ENCODE measurements at regions of chr1 and their contacts with region 1.

Region 1: GRCh38 chr1:233790662-233791375 is 113.7 kb upstream of the SLC35F3 start:
- DNase-seq: peak in 1 of 2 donors; percentile 28
- ATAC-seq: peak in 7 of 8 donors; percentile 67 to 88 (median 79)
- H3K4me3 ChIP-seq: no peak overlapping the region
- H3K27ac ChIP-seq: no peak overlapping the region
- H3K4me1 ChIP-seq: no peaks in the 10 kb centered on the region
- H3K27me3 ChIP-seq: peaks cover 0 to 12% (median 0%) of the 10 kb centered on the region in 7 donors
- CTCF ChIP-seq: peak; percentile 65 to 87 (median 84)

Region 2: GRCh38 chr1:233394860-233395717 is 395.7 kb before region 1 on chr1:
- intact Hi-C with region 1: loop called in 1 of 10 experiments (anchors 10 kb)
- DNase-seq: peak in 1 of 2 donors; percentile 16
- ATAC-seq: peak in 5 of 8 donors; percentile 60 to 88 (median 73)
- H3K4me3 ChIP-seq: no peak overlapping the region
- H3K27ac ChIP-seq: no peak overlapping the region
- H3K4me1 ChIP-seq: peaks cover 0 to 4% (median 0%) of the 10 kb centered on the region in 9 donors
- H3K27me3 ChIP-seq: peaks cover 0 to 38% (median 7%) of the 10 kb centered on the region in 7 donors
- CTCF ChIP-seq: peak; percentile 21 to 77 (median 67)

Region 3: GRCh38 chr1:233440951-233441401 is 349.8 kb before region 1 on chr1:
- intact Hi-C with region 1: loop called in 9 of 10 experiments (anchors 2 to 10 kb)
- DNase-seq: peak in 1 of 2 donors; percentile 7
- ATAC-seq: peak in 5 of 8 donors; percentile 38 to 51 (median 47)
- H3K4me3 ChIP-seq: no peak overlapping the region
- H3K27ac ChIP-seq: no peak overlapping the region
- H3K4me1 ChIP-seq: peaks cover 0 to 4% (median 0%) of the 10 kb centered on the region in 9 donors
- H3K27me3 ChIP-seq: peaks cover 0 to 30% (median 15%) of the 10 kb centered on the region in 7 donors
- CTCF ChIP-seq: peak; percentile 14 to 74 (median 60)

Region 4: DNA sequence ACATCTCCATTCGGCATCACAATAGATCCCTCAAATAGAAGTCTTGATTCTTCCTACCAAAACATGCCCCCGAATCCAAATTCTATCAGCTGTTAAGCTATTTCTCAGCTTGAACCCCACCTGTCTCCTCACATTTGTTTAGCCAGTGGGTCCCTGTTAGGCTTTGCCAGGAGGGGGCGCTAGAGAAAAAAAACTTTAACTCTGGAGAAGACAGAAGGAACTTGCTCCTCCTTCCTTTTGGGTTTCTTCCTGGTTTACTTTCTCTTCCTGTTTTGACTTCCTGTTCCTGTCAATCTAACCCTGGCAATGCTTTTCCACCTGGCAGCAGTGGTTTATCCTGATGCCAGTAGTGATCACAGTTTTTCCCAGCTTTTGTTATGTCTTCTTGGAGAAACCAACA is 272.5 kb before region 1 on chr1:
- intact Hi-C with region 1: loop called in 8 of 10 experiments (anchors 1 to 10 kb)
- DNase-seq: no peak
- ATAC-seq: no peak
- H3K4me3 ChIP-seq: no peak overlapping the region
- H3K27ac ChIP-seq: no peak overlapping the region
- H3K4me1 ChIP-seq: no peaks in the 10 kb centered on the region
- H3K27me3 ChIP-seq: peaks cover 0 to 3% (median 0%) of the 10 kb centered on the region in 7 donors
- CTCF ChIP-seq: peak; percentile 12 to 59 (median 50)

Region 5: DNA sequence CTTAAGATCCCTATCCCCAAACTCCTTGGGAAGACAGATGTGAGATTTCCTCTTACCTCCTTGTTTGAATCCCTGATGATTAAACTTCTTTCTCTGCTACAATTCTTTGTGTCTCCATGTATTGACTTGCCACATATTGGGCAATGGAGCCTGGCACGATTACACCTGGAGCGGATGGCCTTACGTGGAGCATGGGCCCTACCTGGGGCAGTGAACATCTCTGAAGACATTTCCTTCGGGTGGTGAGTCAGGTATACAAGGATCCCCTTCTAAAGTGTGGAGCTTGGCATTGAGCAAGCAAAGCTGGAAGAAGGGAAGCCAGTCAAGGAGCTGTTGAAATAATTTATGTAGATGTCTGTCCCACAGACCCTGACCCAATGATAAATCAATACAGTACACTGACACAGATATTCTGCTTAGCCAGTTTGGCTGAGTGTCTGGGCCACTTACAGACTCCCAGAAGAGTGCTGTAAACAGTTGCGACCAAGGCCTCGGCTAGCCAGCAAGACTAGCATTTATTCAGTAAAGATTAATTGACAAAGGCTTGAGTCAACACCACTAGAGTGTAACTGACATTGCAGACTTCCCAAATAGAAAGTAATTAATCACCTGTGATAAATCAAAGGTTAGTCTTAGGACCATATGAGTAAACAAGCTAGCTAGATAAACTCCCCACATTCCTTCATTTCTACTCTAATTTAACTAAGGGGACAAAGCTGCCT is 260.0 kb before region 1 on chr1:
- intact Hi-C with region 1: no loop called
- DNase-seq: no peak
- ATAC-seq: no peak
- H3K4me3 ChIP-seq: no peak overlapping the region
- H3K27ac ChIP-seq: no peak overlapping the region
- H3K4me1 ChIP-seq: no peaks in the 10 kb centered on the region
- H3K27me3 ChIP-seq: peaks cover 0 to 9% (median 4%) of the 10 kb centered on the region in 7 donors
- CTCF ChIP-seq: no peak

Region 6: DNA sequence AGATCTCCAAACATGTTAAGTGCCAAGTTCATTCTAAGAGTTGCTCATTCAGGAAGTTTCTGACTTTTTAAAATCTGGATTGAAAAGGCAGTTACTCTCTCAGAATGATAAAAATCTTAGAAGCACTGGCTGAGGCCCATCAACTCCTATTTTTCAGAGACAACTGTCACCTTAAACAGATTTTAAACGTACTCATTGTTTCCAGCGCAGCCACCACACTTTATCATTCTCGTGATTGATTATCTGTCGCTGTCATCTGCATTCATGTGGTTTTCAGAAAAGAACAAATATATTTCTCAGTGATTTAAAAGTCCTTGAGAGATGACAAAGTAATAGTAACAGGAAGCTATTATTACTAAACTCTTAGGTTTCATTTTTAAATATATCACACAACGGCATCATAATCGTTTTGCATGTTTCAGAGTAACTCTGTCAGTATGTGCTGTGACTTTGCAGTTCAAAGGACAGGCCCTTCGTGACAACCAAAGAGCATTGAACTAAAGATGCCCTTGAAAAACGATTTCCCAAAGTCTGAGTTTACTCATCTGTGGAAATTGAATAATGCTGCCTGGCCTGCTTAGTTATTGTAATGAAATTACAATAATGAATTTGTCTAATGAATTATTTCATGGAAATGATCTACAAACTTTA is 191.8 kb before region 1 on chr1:
- intact Hi-C with region 1: no loop called
- DNase-seq: no peak
- ATAC-seq: no peak
- H3K4me3 ChIP-seq: no peak overlapping the region
- H3K27ac ChIP-seq: no peak overlapping the region
- H3K4me1 ChIP-seq: no peaks in the 10 kb centered on the region
- H3K27me3 ChIP-seq: no peaks in the 10 kb centered on the region
- CTCF ChIP-seq: no peak

Region 7: GRCh38 chr1:233972939-233973635 is 182.3 kb after region 1 on chr1:
- intact Hi-C with region 1: no loop called
- DNase-seq: no peak
- ATAC-seq: no peak
- H3K4me3 ChIP-seq: no peak overlapping the region
- H3K27ac ChIP-seq: no peak overlapping the region
- H3K4me1 ChIP-seq: no peaks in the 10 kb centered on the region
- H3K27me3 ChIP-seq: no peaks in the 10 kb centered on the region
- CTCF ChIP-seq: no peak

Region 8: GRCh38 chr1:234212764-234213657 is 422.2 kb after region 1 on chr1:
- intact Hi-C with region 1: no loop called
- DNase-seq: no peak
- ATAC-seq: peak in 5 of 8 donors; percentile 31 to 76 (median 61)
- H3K4me3 ChIP-seq: no peak overlapping the region
- H3K27ac ChIP-seq: no peak overlapping the region
- H3K4me1 ChIP-seq: peaks cover 4 to 25% (median 8%) of the 10 kb centered on the region in 9 donors
- H3K27me3 ChIP-seq: peaks cover 9 to 70% (median 55%) of the 10 kb centered on the region in 7 donors
- CTCF ChIP-seq: peak in 7 of 9 donors; percentile 21 to 55 (median 40)

Measured in heart right ventricle (tissue), 16 donors.